Activated B cell treated with CpG ODN at 0.5 μM for 24 hours (primary cell): ENCODE measurements at regions of chr10 and their contacts with region 1.

Region 1: GRCh38 chr10:121927841-121928527 is at the start of gene ATE1:
- DNase-seq: peak; percentile 79
- ATAC-seq: peak; percentile 91
- H3K4me3 Mint-ChIP-seq: peak within 1 kb of the TSS; percentile 94
- H3K27ac Mint-ChIP-seq: peak within 1 kb of the TSS; percentile 91
- H3K4me1 Mint-ChIP-seq: peaks cover 19% of the 10 kb centered on the region
- H3K27me3 Mint-ChIP-seq: no peaks in the 10 kb centered on the region
- CTCF ChIP-seq: no peak
- total RNA-seq, gene ATE1: 26.0 and 31.0 TPM in 2 replicates

Region 2: DNA sequence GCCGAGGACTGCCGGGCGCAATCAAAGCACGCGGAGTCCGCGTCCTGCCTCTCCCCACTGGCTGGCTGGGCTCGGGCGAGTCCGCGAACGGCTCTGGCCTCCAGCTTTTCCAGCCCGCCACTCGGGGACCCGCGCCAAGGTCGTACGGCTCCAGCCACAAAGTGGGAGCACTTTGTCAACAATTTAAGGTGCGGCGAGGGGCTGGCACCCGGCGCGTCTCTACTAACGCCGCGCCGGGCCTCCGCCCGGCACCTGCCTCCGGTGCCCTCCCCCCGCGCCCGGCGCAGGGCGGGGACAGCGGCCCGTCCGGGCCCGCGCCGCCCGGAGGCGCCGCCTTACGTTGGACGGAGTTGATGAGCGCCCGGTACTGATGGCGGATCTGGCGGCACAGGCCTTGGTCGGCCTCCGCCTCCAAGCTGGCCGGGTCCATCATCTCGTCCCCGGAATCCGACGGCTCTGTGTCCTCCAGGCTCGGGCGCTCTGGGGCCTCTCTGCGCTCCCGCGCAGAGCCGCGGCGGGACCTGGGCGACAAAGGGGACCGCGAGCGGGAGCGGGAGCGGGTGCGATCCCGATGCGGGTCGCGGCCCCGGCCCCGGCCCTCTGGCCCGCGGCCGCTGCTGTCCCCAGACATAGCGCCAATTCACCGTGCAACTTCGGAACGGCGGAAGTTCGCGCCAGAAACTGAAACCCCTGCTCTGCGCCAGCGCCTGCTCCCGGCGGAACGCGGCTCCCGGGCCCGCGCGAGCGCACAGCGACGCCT is 46.7 kb after region 1 on chr10 and contains the start of gene NSMCE4A:
- CTCF ChIA-PET with region 1: no interaction called
- POLR2A ChIA-PET with region 1: interaction called, 6 read pairs
- intact Hi-C with region 1: loop called (anchors 1 kb)
- DNase-seq: peak; percentile 71
- ATAC-seq: peak; percentile 83
- H3K4me3 Mint-ChIP-seq: peak within 1 kb of the TSS; percentile 83
- H3K27ac Mint-ChIP-seq: peak within 1 kb of the TSS; percentile 18
- H3K4me1 Mint-ChIP-seq: peaks cover 26% of the 10 kb centered on the region
- H3K27me3 Mint-ChIP-seq: no peaks in the 10 kb centered on the region
- CTCF ChIP-seq: no peak
- total RNA-seq, gene NSMCE4A: 70.3 and 78.0 TPM in 2 replicates

Region 3: GRCh38 chr10:122879339-122880273 is 951.6 kb after region 1 on chr10 and contains the start of gene FAM24B:
- CTCF ChIA-PET with region 1: no interaction called
- POLR2A ChIA-PET with region 1: no interaction called
- intact Hi-C with region 1: loop called (anchors 5 kb)
- DNase-seq: peak; percentile 83
- ATAC-seq: peak; percentile 85
- H3K4me3 Mint-ChIP-seq: peak within 1 kb of the TSS; percentile 85
- H3K27ac Mint-ChIP-seq: peak within 1 kb of the TSS; percentile 84
- H3K4me1 Mint-ChIP-seq: peaks cover 40% of the 10 kb centered on the region
- H3K27me3 Mint-ChIP-seq: no peaks in the 10 kb centered on the region
- CTCF ChIP-seq: no peak
- total RNA-seq, gene FAM24B: 7.3 and 10.0 TPM in 2 replicates